ENCODE measurements at regions of chr18 and their contacts with region 1.

Region 1: GRCh38 chr18:76803814-76804213 is 18.5 kb upstream of the ZNF236 start:
- DNase-seq: peak; percentile 51
- ATAC-seq: peak; percentile 84
- H3K4me3 ChIP-seq: no peak overlapping the region
- H3K27ac ChIP-seq: no peak overlapping the region
- H3K4me1 ChIP-seq: peaks cover 7% of the 10 kb centered on the region; the same call in 1 of the 2 replicates
- H3K27me3 ChIP-seq: no peaks in the 10 kb centered on the region
- CTCF ChIP-seq: peak; percentile 87 to 91 (median 90)
- EP300 ChIP-seq: no peak
- POLR2A ChIP-seq: no peak
- RAD21 ChIP-seq: peak; percentile 77

Region 2: GRCh38 chr18:76791106-76791505 is 12.7 kb before region 1 on chr18:
- CTCF ChIA-PET with region 1: interaction called, 35 read pairs
- POLR2A ChIA-PET with region 1: no interaction called
- RAD21 ChIA-PET with region 1: no interaction called
- SMC1A ChIA-PET with region 1: interaction called, 3 read pairs
- in situ Hi-C with region 1: no loop called
- intact Hi-C with region 1: no loop called
- DNase-seq: no peak
- ATAC-seq: no peak
- H3K4me3 ChIP-seq: no peak overlapping the region
- H3K27ac ChIP-seq: no peak overlapping the region
- H3K4me1 ChIP-seq: no peaks in the 10 kb centered on the region
- H3K27me3 ChIP-seq: no peaks in the 10 kb centered on the region
- CTCF ChIP-seq: no peak
- EP300 ChIP-seq: no peak
- POLR2A ChIP-seq: no peak
- RAD21 ChIP-seq: no peak

Region 3: GRCh38 chr18:76859474-76860339 is 55.9 kb after region 1 on chr18:
- CTCF ChIA-PET with region 1: interaction called, 21 read pairs
- POLR2A ChIA-PET with region 1: no interaction called
- RAD21 ChIA-PET with region 1: no interaction called
- SMC1A ChIA-PET with region 1: no interaction called
- in situ Hi-C with region 1: no loop called
- intact Hi-C with region 1: no loop called
- DNase-seq: peak; percentile 30
- ATAC-seq: peak; percentile 98
- H3K4me3 ChIP-seq: no peak overlapping the region
- H3K27ac ChIP-seq: peak overlapping the region; percentile 56
- H3K4me1 ChIP-seq: peaks cover 5% of the 10 kb centered on the region
- H3K27me3 ChIP-seq: no peaks in the 10 kb centered on the region
- CTCF ChIP-seq: no peak
- EP300 ChIP-seq: no peak
- POLR2A ChIP-seq: no peak
- RAD21 ChIP-seq: no peak

Region 4: DNA sequence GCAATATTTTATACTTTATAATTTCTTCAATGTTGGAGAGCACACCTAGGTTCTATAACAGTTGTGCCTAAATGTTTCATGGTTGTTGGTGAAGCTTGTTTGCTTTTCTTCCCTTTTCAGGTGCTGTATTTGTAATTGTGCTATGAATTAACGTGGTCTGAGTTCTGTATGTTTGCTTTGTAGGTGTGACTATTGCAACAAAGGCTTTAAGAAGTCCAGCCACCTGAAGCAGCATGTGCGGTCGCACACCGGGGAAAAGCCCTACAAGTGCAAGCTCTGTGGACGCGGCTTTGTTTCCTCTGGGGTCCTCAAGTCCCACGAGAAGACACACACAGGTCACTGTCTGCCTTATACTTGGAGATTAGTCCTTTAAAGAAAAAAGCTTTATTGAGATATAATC is 109.8 kb after region 1 on chr18:
- CTCF ChIA-PET with region 1: interaction called, 64 read pairs
- POLR2A ChIA-PET with region 1: no interaction called
- RAD21 ChIA-PET with region 1: no interaction called
- SMC1A ChIA-PET with region 1: interaction called, 5 read pairs
- in situ Hi-C with region 1: no loop called
- intact Hi-C with region 1: no loop called
- DNase-seq: no peak
- ATAC-seq: no peak
- H3K4me3 ChIP-seq: no peak overlapping the region
- H3K27ac ChIP-seq: no peak overlapping the region
- H3K4me1 ChIP-seq: no peaks in the 10 kb centered on the region; the same call in 1 of the 2 replicates
- H3K27me3 ChIP-seq: no peaks in the 10 kb centered on the region
- CTCF ChIP-seq: no peak
- EP300 ChIP-seq: no peak
- POLR2A ChIP-seq: no peak
- RAD21 ChIP-seq: no peak

Region 5: GRCh38 chr18:76982841-76983587 is 179.2 kb after region 1 on chr18:
- CTCF ChIA-PET with region 1: interaction called, 167 read pairs
- POLR2A ChIA-PET with region 1: interaction called, 4 read pairs
- RAD21 ChIA-PET with region 1: interaction called, 63 read pairs
- SMC1A ChIA-PET with region 1: interaction called, 73 read pairs
- in situ Hi-C with region 1: loop called (anchors 10 kb)
- intact Hi-C with region 1: loop called (anchors 1 kb)
- DNase-seq: peak; percentile 48
- ATAC-seq: peak; percentile 83
- H3K4me3 ChIP-seq: no peak overlapping the region
- H3K27ac ChIP-seq: no peak overlapping the region
- H3K4me1 ChIP-seq: peaks cover 21% of the 10 kb centered on the region
- H3K27me3 ChIP-seq: no peaks in the 10 kb centered on the region
- CTCF ChIP-seq: peak; percentile 91 to 93 (median 92)
- EP300 ChIP-seq: no peak
- POLR2A ChIP-seq: no peak
- RAD21 ChIP-seq: peak; percentile 83

Region 6: GRCh38 chr18:77207540-77207939 is 403.7 kb after region 1 on chr18:
- CTCF ChIA-PET with region 1: interaction called, 36 read pairs
- POLR2A ChIA-PET with region 1: interaction called, 3 read pairs
- RAD21 ChIA-PET with region 1: interaction called, 16 read pairs
- SMC1A ChIA-PET with region 1: interaction called, 8 read pairs
- in situ Hi-C with region 1: no loop called
- intact Hi-C with region 1: loop called (anchors 10 kb)
- DNase-seq: no peak
- ATAC-seq: peak; percentile 54
- H3K4me3 ChIP-seq: no peak overlapping the region
- H3K27ac ChIP-seq: no peak overlapping the region
- H3K4me1 ChIP-seq: peaks cover 4% of the 10 kb centered on the region
- H3K27me3 ChIP-seq: no peaks in the 10 kb centered on the region
- CTCF ChIP-seq: peak in 2 of 3 experiments; percentile 47 to 61; a peak in 4 of 6 replicates
- EP300 ChIP-seq: no peak
- POLR2A ChIP-seq: no peak
- RAD21 ChIP-seq: 0 out of 2 replicates have a peak, but pooled peaks have one; percentile 2